SK-N-SH (cell line): ENCODE measurements at regions of chr19 and their contacts with region 1.

Region 1: DNA sequence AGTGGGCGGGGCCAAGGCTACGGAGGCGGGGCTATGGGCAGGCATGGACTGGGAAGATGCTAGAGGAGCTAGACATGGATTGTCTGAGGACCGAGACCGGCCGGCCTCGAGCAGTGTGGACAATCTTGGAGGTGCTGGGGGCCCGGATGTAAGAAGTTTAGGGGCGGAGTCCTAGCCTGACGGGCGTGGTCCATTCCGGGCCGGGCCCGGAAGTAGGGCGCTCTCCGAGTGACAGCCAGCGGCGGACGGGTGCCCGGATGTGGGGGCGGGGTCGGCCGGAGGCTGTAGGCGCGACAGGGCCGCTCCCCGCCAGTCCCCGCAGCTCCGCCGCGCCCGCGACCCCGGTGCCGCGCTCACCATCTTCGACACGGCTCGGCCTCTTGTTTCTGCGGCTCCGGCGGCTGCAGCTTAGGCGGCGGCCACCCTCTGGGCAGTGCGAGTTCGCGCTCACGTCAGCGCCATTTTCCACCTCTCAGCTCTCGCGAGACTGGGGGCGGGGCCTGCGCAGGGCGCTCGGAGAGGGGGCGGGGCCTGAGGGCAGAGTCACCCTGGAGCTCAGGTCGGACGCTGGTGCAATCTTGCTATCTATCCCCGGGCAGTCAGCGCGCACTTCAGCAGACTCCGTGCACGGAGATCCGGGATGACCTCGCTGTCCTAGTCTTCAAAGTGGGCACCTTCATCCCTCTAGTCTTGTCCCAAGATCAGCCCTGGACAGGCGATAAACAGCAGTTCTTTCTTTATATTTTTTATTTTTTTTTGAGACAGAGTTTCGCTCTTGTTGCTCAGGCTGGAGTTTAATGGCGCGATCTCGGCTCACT is at the start of gene ZNF414:
- DNase-seq: peak; percentile 98
- H3K4me3 ChIP-seq: peak within 1 kb of the TSS; percentile 63 to 65
- H3K27ac ChIP-seq: peak within 1 kb of the TSS; percentile 89 to 93
- H3K4me1 ChIP-seq: peaks cover 10 to 16% of the 10 kb centered on the region in 2 experiments; a peak in 3 of 4 replicates
- H3K27me3 ChIP-seq: no peaks in the 10 kb centered on the region
- CTCF ChIP-seq: no peak
- EP300 ChIP-seq: no peak
- RAD21 ChIP-seq: no peak
- polyA plus RNA-seq, gene ZNF414: 12.2 and 17.0 TPM in 2 replicates

Region 2: DNA sequence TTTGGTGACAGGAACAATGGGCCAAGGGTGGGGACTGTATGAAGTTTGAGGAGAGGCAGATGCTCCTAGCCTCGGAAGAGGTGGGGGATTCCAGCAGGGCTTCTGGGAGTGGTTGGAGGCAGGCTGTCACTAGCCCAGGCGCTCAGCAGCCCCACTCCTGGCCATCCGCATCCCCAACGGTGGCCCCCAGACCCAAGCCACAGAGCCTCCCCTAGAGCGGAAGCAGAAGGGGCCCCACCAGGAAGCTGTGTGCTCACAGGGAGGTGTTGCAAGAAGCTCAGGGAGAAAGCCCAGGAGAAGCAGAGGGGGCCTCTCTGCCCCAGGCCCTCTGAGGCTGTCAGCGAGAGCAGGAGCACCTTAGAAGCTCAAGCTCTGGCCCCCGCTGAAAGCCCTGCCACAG is 19.7 kb before region 1 on chr19:
- CTCF ChIA-PET with region 1: no interaction called
- POLR2A ChIA-PET with region 1: no interaction called
- DNase-seq: no peak
- H3K4me3 ChIP-seq: no peak overlapping the region
- H3K27ac ChIP-seq: no peak overlapping the region
- H3K4me1 ChIP-seq: no peaks in the 10 kb centered on the region
- H3K27me3 ChIP-seq: no peaks in the 10 kb centered on the region
- CTCF ChIP-seq: no peak
- EP300 ChIP-seq: no peak
- RAD21 ChIP-seq: no peak

Region 3: DNA sequence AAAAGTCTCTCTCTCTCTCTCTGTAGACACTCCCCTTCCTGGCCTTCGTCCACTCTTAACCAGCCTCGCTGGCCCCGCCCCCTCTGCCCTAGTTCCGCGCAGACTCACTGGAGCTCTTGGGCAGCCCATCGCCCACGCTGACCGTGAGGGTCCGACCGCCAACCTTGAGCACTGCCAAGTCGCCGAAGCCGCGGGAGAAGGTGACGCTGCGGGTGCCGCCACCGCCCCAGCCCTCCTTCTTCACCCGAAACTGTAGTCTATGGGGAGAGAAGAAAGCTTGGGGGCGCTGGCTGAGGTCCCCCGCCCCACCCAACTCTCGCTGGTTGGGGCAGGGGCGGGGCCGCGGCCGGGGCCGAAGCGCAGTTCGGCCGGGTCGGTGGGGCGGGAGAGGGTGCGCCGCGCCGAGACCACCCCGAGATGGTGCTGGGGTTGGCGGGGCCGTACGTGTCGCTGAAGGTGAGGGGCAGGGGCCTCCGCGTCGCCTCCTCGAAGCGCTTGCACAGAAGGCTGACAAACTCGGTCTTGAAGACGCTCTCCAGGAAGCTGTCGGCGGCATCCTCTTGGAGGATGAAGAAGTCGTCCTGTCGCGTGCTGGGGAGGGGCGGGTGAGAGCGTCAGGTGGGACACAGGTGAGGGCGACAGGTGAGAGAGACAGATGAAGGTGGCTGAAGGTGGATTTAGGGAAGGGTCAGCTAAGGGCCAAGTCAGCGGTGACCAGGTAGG is 12.6 kb after region 1 on chr19:
- CTCF ChIA-PET with region 1: interaction called, 7 read pairs
- POLR2A ChIA-PET with region 1: interaction called, 18 read pairs
- DNase-seq: peak; percentile 95
- H3K4me3 ChIP-seq: peak overlapping the region; percentile 63 to 77
- H3K27ac ChIP-seq: peak overlapping the region; percentile 73 to 97
- H3K4me1 ChIP-seq: peaks cover 0 to 7% of the 10 kb centered on the region in 2 experiments; a peak in 1 of 4 replicates
- H3K27me3 ChIP-seq: no peaks in the 10 kb centered on the region
- CTCF ChIP-seq: no peak
- EP300 ChIP-seq: no peak
- RAD21 ChIP-seq: no peak

Region 4: GRCh38 chr19:8537099-8537498 is 23.2 kb after region 1 on chr19:
- CTCF ChIA-PET with region 1: no interaction called
- POLR2A ChIA-PET with region 1: no interaction called
- DNase-seq: no peak
- H3K4me3 ChIP-seq: no peak overlapping the region
- H3K27ac ChIP-seq: no peak overlapping the region
- H3K4me1 ChIP-seq: no peaks in the 10 kb centered on the region
- H3K27me3 ChIP-seq: no peaks in the 10 kb centered on the region; the same call in 1 of the 2 replicates
- CTCF ChIP-seq: no peak
- EP300 ChIP-seq: no peak
- RAD21 ChIP-seq: no peak

Region 5: DNA sequence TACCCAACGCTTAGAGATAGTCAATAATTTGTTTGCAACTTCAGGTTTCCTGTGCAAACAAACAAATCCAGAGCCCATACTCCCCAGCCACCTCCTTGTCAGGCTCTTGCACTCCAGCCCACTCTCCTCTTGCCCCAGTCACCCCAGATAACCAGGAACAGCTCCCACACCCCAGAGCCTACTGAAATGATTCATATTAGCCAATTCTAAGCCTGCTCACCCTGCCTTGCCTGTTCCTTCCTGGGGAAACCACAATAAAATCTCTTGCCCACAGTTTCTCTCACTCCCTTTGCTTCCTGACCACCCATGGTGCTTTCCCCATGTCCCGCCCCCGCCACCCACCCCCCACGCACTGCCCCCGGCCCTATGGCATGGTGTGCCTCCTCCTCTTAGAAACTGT is 188.5 kb after region 1 on chr19:
- CTCF ChIA-PET with region 1: no interaction called
- POLR2A ChIA-PET with region 1: no interaction called
- DNase-seq: no peak
- H3K4me3 ChIP-seq: no peak overlapping the region
- H3K27ac ChIP-seq: no peak overlapping the region
- H3K4me1 ChIP-seq: no peaks in the 10 kb centered on the region
- H3K27me3 ChIP-seq: peaks cover 25% of the 10 kb centered on the region; the same call in 1 of the 2 replicates
- CTCF ChIP-seq: no peak
- EP300 ChIP-seq: no peak
- RAD21 ChIP-seq: no peak